WTC11 (cell line): ENCODE measurements at regions of chr1 and their contacts with region 1.

Region 1: DNA sequence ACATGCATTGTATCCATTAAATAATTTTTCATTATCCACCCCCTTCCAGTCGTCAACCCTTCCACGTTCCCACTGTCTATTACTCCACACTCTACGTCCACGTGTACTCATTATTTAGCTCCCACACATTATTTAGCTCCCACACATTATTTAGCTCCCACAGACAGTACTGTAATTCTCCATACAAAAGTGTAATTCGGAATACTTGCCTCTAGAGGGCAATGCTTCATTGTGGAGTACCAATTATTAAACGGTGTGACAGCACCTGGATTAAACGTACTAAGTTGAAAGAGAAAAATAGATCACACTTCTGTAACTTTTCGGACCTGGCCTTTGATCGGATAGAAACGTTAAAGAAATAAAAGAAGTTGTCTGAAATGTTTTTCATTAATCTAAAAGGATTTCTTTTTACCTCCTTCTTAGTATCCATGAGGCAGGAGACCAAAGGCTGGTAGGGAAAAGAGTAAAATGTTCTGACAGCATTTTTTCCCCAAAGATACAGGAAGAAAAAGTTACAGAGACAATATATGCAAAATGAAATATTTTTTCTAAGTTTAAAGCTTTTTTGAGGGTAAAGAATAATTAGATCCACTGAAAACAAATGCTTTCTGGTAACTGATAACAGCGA is 99.2 kb downstream of the LHX8 start:
- DNase-seq: no peak
- ATAC-seq: peak; percentile 87
- H3K4me3 Mint-ChIP-seq: no peak overlapping the region
- H3K27ac Mint-ChIP-seq: no peak overlapping the region
- H3K4me1 Mint-ChIP-seq: no peaks in the 10 kb centered on the region
- H3K27me3 Mint-ChIP-seq: no peaks in the 10 kb centered on the region
- CTCF ChIP-seq: peak; percentile 69

Region 2: GRCh38 chr1:75220072-75220471 is 13.3 kb before region 1 on chr1:
- CTCF ChIA-PET with region 1: interaction called, 12 read pairs
- POLR2A ChIA-PET with region 1: no interaction called
- DNase-seq: no peak
- ATAC-seq: no peak
- H3K4me3 Mint-ChIP-seq: no peak overlapping the region
- H3K27ac Mint-ChIP-seq: no peak overlapping the region
- H3K4me1 Mint-ChIP-seq: no peaks in the 10 kb centered on the region
- H3K27me3 Mint-ChIP-seq: no peaks in the 10 kb centered on the region
- CTCF ChIP-seq: no peak

Region 3: GRCh38 chr1:75245239-75245638 is 11.8 kb after region 1 on chr1:
- CTCF ChIA-PET with region 1: interaction called, 17 read pairs
- POLR2A ChIA-PET with region 1: no interaction called
- DNase-seq: no peak
- ATAC-seq: no peak
- H3K4me3 Mint-ChIP-seq: no peak overlapping the region
- H3K27ac Mint-ChIP-seq: no peak overlapping the region
- H3K4me1 Mint-ChIP-seq: peaks cover 3% of the 10 kb centered on the region; the same call in 1 of the 2 replicates
- H3K27me3 Mint-ChIP-seq: no peaks in the 10 kb centered on the region
- CTCF ChIP-seq: no peak

Region 4: DNA sequence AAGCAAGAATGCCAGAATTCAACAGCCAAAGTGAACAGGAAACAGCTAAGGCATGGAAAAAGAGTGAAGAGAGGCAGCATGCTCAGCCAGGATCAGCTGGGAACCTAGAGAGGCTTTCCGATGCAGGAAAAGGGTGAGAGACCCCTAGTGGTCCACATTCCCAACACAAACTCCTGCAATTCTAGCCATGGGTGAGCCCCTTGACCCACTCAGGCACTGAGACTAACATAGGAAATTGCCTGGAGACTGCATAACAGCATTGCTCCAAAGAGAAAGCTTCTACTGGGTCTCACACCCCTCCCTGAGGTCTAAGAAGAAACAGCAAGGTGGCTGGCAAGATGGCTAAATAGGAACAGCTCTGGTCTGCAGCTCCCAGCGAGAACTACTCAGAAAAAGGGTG is 24.0 kb after region 1 on chr1:
- CTCF ChIA-PET with region 1: interaction called, 12 read pairs
- POLR2A ChIA-PET with region 1: no interaction called
- DNase-seq: peak; percentile 53
- ATAC-seq: peak; percentile 98
- H3K4me3 Mint-ChIP-seq: no peak overlapping the region
- H3K27ac Mint-ChIP-seq: no peak overlapping the region
- H3K4me1 Mint-ChIP-seq: no peaks in the 10 kb centered on the region
- H3K27me3 Mint-ChIP-seq: no peaks in the 10 kb centered on the region
- CTCF ChIP-seq: peak; percentile 29; the same call in 1 of the 2 replicates

Region 5: GRCh38 chr1:75293270-75293669 is 59.9 kb after region 1 on chr1:
- CTCF ChIA-PET with region 1: no interaction called
- POLR2A ChIA-PET with region 1: no interaction called
- DNase-seq: no peak
- ATAC-seq: no peak
- H3K4me3 Mint-ChIP-seq: no peak overlapping the region
- H3K27ac Mint-ChIP-seq: no peak overlapping the region
- H3K4me1 Mint-ChIP-seq: no peaks in the 10 kb centered on the region
- H3K27me3 Mint-ChIP-seq: no peaks in the 10 kb centered on the region
- CTCF ChIP-seq: no peak